Sigmoid colon (tissue), 7 donors: ENCODE measurements at regions of chr15 and their contacts with region 1.

Region 1: GRCh38 chr15:63805993-63806980 is 27.5 kb downstream of the HERC1 start:
- DNase-seq: no peak
- H3K4me3 ChIP-seq: no peak overlapping the region
- H3K27ac ChIP-seq: no peak overlapping the region
- H3K4me1 ChIP-seq: peaks cover 0 to 85% (median 44%) of the 10 kb centered on the region in 4 donors
- H3K27me3 ChIP-seq: no peaks in the 10 kb centered on the region
- CTCF ChIP-seq: no peak
- EP300 ChIP-seq: no peak
- POLR2A ChIP-seq: no peak

Region 2: GRCh38 chr15:63839722-63840121 is 33.4 kb after region 1 on chr15:
- intact Hi-C with region 1: loop called (anchors 5 kb)
- DNase-seq: no peak
- H3K4me3 ChIP-seq: no peak overlapping the region
- H3K27ac ChIP-seq: no peak overlapping the region
- H3K4me1 ChIP-seq: peaks cover 0 to 8% (median 3%) of the 10 kb centered on the region in 4 donors
- H3K27me3 ChIP-seq: no peaks in the 10 kb centered on the region
- CTCF ChIP-seq: no peak
- EP300 ChIP-seq: no peak
- POLR2A ChIP-seq: no peak

Region 3: DNA sequence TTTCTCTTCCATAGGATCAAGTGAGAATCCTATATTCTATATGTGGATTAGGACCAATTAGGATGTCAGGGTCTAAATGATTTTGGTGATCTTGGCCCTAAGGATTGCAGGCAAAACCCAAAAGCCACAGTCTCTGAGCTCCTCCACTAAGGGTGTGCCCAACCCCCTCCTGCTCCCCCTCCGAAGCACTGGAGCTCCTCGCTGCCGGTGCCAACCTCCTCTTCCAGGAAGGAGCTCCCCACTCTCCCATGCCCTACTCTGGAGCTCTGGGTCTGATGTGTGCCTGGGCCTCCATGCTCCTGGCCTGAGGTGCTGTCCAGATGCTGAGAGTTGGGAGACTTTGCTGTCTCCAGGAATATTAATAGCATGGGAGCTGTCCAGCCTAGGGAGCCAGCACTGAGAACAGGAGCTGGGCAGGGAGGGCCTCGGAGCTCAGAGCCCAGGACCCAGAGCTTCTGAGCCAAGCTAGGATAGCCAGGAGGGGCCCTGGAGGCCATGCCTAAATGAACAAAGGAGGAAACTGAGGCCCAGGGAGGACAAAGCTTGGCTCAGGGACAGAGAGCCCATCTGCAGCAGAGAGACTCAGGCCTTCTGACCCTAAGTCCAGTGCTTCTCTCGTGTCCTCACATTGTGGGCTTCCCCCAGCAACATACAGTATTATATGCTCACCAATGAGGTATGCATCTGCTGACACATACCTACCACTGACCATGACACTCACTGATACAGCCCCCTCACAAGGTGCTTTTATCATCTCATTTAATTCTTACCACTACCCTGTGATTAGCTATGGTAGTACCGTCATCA is 64.3 kb after region 1 on chr15:
- intact Hi-C with region 1: no loop called
- DNase-seq: no peak
- H3K4me3 ChIP-seq: no peak overlapping the region
- H3K27ac ChIP-seq: no peak overlapping the region
- H3K4me1 ChIP-seq: no peaks in the 10 kb centered on the region
- H3K27me3 ChIP-seq: no peaks in the 10 kb centered on the region
- CTCF ChIP-seq: no peak
- EP300 ChIP-seq: no peak
- POLR2A ChIP-seq: no peak

Region 4: GRCh38 chr15:64024172-64025050 is 218.1 kb after region 1 on chr15:
- intact Hi-C with region 1: no loop called
- DNase-seq: no peak
- H3K4me3 ChIP-seq: no peak overlapping the region
- H3K27ac ChIP-seq: no peak overlapping the region
- H3K4me1 ChIP-seq: peaks cover 0 to 16% (median 9%) of the 10 kb centered on the region in 4 donors
- H3K27me3 ChIP-seq: no peaks in the 10 kb centered on the region
- CTCF ChIP-seq: no peak
- EP300 ChIP-seq: no peak
- POLR2A ChIP-seq: no peak